Cardiac septum (tissue), 1 donor: ENCODE measurements at regions of chr17 and their contacts with region 1.

Region 1: DNA sequence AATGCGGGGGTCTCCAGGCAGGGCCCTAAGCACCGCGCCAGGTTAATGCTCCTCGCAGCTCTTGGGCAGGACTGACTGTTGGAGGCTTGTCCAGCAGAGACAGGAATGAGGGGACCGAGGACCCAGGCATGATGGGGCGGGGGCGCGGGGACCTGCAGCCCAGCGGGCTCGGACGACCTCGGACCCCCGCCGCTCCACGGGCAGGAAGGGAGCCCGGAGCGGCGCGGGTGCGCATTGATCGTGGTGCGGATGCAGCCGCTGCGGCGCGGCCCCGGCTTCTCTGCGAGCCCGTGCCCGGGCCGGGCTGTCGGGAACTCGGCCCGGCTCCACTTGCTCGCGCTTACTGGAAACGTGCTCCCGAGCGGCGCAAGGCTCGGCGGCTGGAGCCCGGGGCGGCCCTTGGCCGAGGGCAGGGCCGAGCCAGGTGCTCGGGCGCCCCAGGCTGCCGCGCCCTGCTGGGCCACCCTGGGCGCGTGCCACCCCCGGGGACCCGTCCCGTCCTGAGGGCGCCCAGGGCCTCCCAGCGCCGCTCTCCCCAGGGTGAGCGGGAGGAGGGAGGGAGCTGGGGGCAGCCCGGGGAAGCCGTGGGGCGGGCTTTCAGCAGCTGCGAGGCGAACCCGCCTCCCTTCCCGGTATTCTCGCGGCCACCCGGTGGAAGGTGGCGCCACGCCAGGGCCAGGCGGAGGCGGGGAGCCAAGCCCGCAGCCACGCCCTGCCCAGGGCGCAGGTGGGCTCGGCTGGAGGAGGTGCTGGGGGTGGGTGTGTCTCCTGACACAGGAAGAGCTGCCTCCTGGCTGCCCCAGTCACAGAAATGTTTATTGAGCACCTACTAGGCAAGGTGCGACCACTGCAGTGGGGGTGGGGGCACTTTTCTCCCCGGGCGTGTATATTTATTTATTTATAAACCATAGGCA is 45.9 kb downstream of the SOCS3 start:
- DNase-seq: peak; percentile 83

Region 2: GRCh38 chr17:78258323-78259191 is 55.4 kb before region 1 on chr17:
- intact Hi-C with region 1: loop called (anchors 2 kb)
- DNase-seq: peak; percentile 92